HCT116 (cell line): ENCODE measurements at regions of chr12 and their contacts with region 1.

Region 1: DNA sequence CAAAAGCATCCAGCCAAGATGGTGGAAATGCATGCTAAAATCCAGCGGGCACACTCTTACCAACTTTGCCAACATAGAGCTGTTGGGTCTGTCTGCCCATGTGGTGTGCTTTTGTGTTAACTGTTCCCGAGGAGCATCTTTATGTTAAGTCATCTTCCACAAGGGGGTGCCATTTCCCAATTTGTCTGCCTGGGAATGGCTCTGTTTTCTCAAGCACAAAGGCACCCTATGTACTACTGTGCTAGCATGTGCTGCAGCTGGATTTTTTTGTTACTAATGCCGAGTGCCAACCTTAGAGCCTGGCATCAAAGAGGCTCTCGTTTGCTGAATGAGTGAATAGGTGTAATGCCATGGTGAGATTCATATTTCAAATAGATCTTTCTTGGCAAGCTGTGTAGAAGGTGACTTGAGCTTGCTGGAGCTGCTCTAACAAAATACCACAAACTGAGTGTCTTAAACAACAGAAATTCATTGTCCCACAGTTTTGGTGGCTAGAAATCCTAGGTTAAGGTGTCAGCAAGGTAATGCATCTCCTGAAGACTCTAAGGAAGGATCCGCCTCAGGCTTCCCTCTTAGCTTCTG is 74.3 kb downstream of the TRHDE start:
- DNase-seq: peak; percentile 77
- ATAC-seq: peak; percentile 100
- H3K4me3 ChIP-seq: no peak overlapping the region
- H3K27ac ChIP-seq: no peak overlapping the region
- H3K4me1 ChIP-seq: no peaks in the 10 kb centered on the region
- H3K27me3 ChIP-seq: no peaks in the 10 kb centered on the region
- CTCF ChIP-seq: peak; percentile 43 to 71 (median 67); a peak in 5 of 6 replicates
- POLR2A ChIP-seq: no peak
- RAD21 ChIP-seq: peak; percentile 84

Region 2: DNA sequence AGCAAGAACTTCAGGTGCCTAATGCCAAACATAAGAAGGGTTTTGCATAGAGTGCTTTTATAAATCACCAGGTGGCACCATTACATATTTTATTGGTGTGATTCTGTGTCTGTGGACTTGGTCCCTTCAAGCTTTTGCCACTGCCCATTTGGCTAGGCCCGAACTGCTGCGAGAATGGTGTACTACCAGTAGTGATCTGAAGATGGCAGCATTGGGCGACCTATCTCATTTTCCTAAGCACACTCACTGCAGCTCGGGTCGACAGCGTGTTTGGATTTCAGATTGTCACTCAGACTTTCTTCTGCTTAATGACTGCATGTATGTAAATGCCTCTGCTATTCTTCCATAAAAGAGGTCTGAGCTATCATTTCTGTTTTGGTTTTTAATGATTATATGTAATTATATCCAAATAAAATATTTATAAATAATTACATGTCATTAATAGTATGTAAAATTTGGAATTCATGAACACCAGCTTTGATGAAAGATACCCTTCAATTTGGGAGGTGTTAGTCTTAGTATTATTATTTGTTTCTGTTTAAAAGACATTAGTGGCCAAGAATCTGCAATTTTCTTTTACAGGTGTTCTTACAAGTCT is 329.3 kb before region 1 on chr12:
- CTCF ChIA-PET with region 1: interaction called, 6 read pairs
- POLR2A ChIA-PET with region 1: no interaction called
- RAD21 ChIA-PET with region 1: no interaction called
- intact Hi-C with region 1: loop called (anchors 5 kb)
- DNase-seq: peak; percentile 85
- ATAC-seq: peak; percentile 98
- H3K4me3 ChIP-seq: no peak overlapping the region
- H3K27ac ChIP-seq: no peak overlapping the region
- H3K4me1 ChIP-seq: no peaks in the 10 kb centered on the region
- H3K27me3 ChIP-seq: no peaks in the 10 kb centered on the region
- CTCF ChIP-seq: peak; percentile 62 to 82 (median 80)
- POLR2A ChIP-seq: no peak
- RAD21 ChIP-seq: peak; percentile 86

Region 3: DNA sequence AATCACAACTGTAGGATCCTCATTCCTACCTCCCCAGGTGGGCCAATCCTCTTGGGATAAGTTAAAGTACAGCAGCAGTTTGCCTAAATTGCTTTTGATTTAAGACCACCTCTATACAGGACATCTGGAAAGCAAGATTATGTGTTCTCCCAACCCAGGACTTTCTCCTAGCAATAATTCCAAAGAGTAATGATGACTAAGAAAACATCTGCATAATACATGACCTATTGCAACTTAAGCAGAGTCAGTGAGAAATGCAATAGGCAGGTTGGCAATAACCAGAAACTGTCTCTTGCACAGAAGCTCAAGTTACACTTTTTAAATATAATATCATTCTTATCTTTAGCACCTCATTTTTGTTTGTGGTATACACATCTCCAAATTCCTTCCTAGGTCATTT is 201.1 kb after region 1 on chr12:
- CTCF ChIA-PET with region 1: no interaction called
- POLR2A ChIA-PET with region 1: no interaction called
- RAD21 ChIA-PET with region 1: no interaction called
- intact Hi-C with region 1: no loop called
- DNase-seq: no peak
- ATAC-seq: no peak
- H3K4me3 ChIP-seq: no peak overlapping the region
- H3K27ac ChIP-seq: no peak overlapping the region
- H3K4me1 ChIP-seq: no peaks in the 10 kb centered on the region
- H3K27me3 ChIP-seq: no peaks in the 10 kb centered on the region
- CTCF ChIP-seq: no peak
- POLR2A ChIP-seq: no peak
- RAD21 ChIP-seq: no peak

Region 4: DNA sequence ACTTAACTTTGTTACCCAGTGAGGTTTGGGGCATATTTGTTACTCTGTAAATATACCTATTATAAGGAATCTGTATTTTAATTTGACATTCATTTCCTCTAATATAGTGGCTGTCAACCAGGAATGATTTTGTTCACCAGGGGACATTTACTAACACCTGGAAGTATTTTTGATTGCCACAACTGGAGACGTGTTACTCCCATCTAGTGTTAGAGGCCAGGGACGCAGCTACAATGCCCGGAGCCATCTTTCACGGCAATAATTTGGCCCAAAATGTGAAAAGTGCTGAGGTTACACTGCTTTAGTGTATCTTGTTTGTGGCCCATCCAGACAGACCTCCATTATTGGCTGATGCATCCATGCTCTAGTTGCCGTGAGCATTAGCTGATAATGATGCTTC is 1309.9 kb after region 1 on chr12:
- CTCF ChIA-PET with region 1: no interaction called
- POLR2A ChIA-PET with region 1: no interaction called
- RAD21 ChIA-PET with region 1: no interaction called
- intact Hi-C with region 1: loop called (anchors 5 kb)
- DNase-seq: no peak
- ATAC-seq: peak; percentile 32; the same call in 1 of the 2 replicates
- H3K4me3 ChIP-seq: no peak overlapping the region
- H3K27ac ChIP-seq: no peak overlapping the region
- H3K4me1 ChIP-seq: no peaks in the 10 kb centered on the region
- H3K27me3 ChIP-seq: no peaks in the 10 kb centered on the region
- CTCF ChIP-seq: peak in 2 of 3 experiments; percentile 23 to 30; a peak in 2 of 6 replicates
- POLR2A ChIP-seq: no peak
- RAD21 ChIP-seq: 0 out of 2 replicates have a peak, but pooled peaks have one; percentile 27

Region 5: DNA sequence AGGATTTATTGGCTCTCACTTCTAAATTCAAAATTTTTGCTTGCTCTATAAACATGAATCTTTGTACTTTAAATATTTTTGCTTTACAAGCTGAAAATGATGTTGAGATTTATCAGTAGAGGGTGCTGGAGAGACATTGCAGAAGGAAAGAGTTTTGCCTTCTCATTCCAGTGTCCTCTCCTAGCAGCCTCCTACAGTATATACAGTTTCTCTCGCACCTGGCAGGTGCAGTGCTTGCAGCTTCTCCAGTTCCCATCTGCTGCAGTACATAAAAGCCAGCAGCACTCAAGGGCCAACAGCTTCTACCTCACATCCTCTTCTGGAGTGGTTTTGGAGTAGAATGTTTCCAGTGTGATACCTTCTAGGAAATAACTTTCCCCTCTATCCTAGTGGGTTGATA is 1589.4 kb after region 1 on chr12:
- CTCF ChIA-PET with region 1: no interaction called
- POLR2A ChIA-PET with region 1: no interaction called
- RAD21 ChIA-PET with region 1: no interaction called
- intact Hi-C with region 1: loop called (anchors 2 kb)
- DNase-seq: peak; percentile 24
- ATAC-seq: peak; percentile 78
- H3K4me3 ChIP-seq: no peak overlapping the region
- H3K27ac ChIP-seq: no peak overlapping the region
- H3K4me1 ChIP-seq: no peaks in the 10 kb centered on the region
- H3K27me3 ChIP-seq: no peaks in the 10 kb centered on the region
- CTCF ChIP-seq: peak; percentile 37 to 54 (median 52); a peak in 4 of 6 replicates
- POLR2A ChIP-seq: no peak
- RAD21 ChIP-seq: peak; percentile 72

Region 6: GRCh38 chr12:74021937-74022336 is 1675.5 kb after region 1 on chr12:
- CTCF ChIA-PET with region 1: no interaction called
- POLR2A ChIA-PET with region 1: no interaction called
- RAD21 ChIA-PET with region 1: no interaction called
- intact Hi-C with region 1: loop called (anchors 5 kb)
- DNase-seq: peak; percentile 68
- ATAC-seq: peak; percentile 100
- H3K4me3 ChIP-seq: no peak overlapping the region
- H3K27ac ChIP-seq: no peak overlapping the region
- H3K4me1 ChIP-seq: peaks cover 0 to 3% of the 10 kb centered on the region in 2 experiments; a peak in 2 of 4 replicates
- H3K27me3 ChIP-seq: no peaks in the 10 kb centered on the region
- CTCF ChIP-seq: peak; percentile 49 to 79 (median 77); a peak in 5 of 6 replicates
- POLR2A ChIP-seq: no peak
- RAD21 ChIP-seq: peak; percentile 75

Region 7: GRCh38 chr12:74317078-74317601 is 1970.7 kb after region 1 on chr12:
- CTCF ChIA-PET with region 1: no interaction called
- POLR2A ChIA-PET with region 1: no interaction called
- RAD21 ChIA-PET with region 1: no interaction called
- intact Hi-C with region 1: loop called (anchors 1 kb)
- DNase-seq: no peak
- ATAC-seq: peak; percentile 97
- H3K4me3 ChIP-seq: no peak overlapping the region
- H3K27ac ChIP-seq: no peak overlapping the region
- H3K4me1 ChIP-seq: no peaks in the 10 kb centered on the region
- H3K27me3 ChIP-seq: no peaks in the 10 kb centered on the region
- CTCF ChIP-seq: peak; percentile 39 to 61 (median 45); a peak in 5 of 6 replicates
- POLR2A ChIP-seq: no peak
- RAD21 ChIP-seq: peak; percentile 77